Cardiac septum (tissue), 1 donor: ENCODE measurements at regions of chr17 and their contacts with region 1.

Region 1: GRCh38 chr17:58587702-58588254 is 73.3 kb upstream of the MTMR4 start:
- DNase-seq: no peak

Region 2: DNA sequence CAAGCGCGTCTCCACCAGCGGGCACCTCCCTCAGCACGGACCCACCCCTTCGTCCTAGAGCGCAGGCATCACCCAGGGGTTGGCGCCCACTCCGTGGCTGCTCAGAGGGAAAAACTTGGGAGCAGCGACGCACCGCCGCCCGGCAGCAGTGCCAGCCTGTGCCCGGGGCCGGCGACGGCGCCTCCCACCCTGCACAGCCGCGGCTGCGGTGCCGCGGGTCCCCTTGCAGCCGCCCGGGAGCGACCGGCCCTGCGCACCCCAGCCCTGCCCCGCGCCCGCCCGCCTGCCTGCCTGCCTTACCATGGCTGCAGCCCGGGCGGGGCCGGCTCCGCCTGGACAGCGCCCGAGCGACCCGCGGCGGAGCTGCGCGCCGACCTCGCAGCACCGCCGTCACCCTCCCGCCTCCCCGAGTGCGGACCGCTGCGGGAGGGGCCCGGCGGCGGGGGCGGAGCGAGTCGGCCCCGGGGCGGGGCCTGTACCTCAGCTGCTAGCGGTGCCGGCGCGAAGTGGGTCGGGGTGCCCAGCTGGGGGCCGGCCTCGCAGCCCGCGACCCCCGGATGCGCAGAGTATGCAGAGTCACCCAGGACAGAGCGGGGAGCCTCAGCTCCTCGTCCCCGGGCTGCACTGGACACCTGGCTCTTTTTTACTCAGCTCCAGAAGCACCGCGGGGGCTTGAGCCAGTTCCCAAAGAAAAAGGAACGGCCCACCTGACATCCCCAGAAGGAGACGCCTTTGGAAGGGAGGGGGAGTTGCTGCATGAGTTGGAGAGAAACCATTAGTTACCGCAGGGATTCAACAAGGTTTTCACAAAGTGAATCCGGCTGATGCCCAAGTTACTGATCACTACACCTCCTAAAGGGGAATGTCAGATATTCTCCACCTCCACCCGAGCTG is 55.9 kb before region 1 on chr17:
- intact Hi-C with region 1: loop called (anchors 5 kb)
- DNase-seq: peak; percentile 86

Region 3: DNA sequence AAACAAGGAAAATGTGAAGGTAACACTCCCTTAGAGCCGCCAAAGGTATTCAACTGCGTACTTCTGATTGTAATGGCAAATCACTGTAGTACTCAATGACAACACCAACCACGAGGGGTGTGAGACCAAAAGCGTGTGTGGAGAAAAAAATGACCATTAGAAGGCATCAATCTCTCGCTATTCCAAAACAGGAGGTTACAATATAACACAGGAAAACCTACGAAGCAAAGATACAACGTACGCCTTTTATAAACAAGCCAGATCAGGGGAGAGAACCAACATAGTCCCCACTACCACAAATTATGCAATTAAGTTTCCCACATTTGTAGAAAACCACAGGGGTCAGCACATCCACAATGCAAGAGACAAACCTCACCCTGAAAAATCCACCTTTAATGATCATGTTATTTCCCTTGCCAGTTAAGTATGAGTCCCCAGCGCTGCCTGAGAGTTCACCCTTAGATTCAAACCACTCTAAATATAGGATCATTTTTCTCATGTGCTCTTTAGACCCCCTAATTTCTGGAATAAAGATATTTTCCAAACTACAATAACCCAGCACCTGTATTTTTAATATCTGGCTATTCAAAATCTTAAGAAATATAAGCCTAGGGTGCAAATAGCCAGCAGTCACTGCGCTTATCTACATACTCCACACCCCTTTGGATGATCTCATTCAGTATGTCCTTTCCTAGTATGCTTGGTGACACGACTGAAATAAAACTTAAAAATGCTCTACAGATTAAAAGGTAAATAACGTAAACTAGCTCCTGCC is 91.7 kb after region 1 on chr17:
- intact Hi-C with region 1: no loop called
- DNase-seq: no peak

Region 4: GRCh38 chr17:58692239-58693055 is 104.7 kb after region 1 on chr17 and contains the start of gene RAD51C:
- intact Hi-C with region 1: loop called (anchors 5 kb)
- DNase-seq: peak; percentile 93
- total RNA-seq, gene RAD51C: 29.2 TPM

Region 5: DNA sequence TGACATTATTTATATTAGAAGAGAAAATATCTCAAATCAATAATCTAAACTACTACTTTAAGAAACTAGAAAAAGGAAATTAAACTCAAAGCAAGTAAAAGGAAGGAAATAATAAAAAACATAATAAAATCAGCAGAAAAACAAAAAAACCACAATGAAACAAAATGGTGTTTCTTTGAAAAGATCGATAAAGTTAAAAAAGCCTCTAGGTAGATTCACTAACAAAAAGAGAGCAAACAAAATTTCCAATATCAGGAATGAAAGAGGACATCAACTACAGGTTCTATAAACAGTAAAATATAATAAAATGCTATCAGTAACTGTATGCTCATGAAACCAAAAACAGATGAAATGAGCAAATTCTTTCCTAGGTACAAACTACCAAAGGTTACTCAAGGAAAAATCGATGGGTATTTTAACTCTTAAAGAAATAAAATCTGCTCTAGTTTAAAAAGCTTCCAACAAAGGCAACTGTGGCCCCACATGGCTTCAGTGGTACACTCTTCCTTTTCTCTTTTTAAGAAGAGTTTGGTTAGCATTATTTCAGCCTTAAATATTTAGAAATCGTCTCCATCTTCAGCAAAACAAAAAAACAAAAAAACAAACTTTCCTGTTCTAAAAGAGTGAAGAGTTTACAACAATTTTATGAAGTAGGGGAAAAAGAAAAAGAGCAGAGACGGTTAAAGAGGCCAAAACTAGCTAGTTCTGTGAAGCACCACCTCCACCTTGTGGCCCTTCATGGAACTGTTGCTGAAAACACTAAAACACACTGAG is 416.7 kb after region 1 on chr17:
- intact Hi-C with region 1: loop called (anchors 2 kb)
- DNase-seq: no peak